Activated CD8-positive, alpha-beta T cell treated with anti-CD3 and anti-CD28 coated beads for 36 hours (primary cell): ENCODE measurements at regions of chr2 and their contacts with region 1.

Region 1: GRCh38 chr2:231411831-231412617 is 16.5 kb downstream of the B3GNT7 start:
- DNase-seq: peak; percentile 88
- ATAC-seq: peak; percentile 99
- H3K4me3 Mint-ChIP-seq: peak overlapping the region; percentile 50
- H3K27ac Mint-ChIP-seq: no peak overlapping the region
- H3K4me1 Mint-ChIP-seq: peaks cover 6% of the 10 kb centered on the region
- H3K27me3 Mint-ChIP-seq: peaks cover 25% of the 10 kb centered on the region
- CTCF ChIP-seq: peak; percentile 85

Region 2: DNA sequence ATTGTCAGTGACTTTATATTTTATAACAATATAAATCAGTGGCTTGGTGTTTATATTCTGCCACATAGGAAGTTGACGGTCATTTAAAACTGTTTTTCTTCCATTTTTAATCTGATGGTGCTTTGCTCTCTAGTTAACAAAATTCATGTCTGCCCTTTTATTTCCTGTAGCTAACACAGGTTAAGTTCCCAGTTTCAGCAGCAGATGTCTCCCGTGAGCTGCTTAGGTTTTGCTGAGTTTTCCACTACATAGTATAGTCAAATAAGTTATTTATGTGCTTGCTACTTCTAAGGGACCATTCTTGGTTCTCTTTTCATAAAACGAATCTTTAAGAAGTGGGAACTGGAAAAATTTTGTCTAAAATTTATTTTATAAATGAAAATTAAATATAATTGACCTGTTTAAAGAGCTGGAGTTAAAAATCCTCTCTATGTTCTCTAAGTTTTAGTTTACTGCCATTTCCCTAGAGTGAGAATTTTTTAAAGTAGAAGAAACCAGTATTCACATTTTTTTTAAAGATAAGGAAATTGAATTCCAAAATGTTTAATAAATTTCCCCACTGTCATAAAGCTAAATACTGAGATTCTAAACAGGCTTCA is 307.8 kb before region 1 on chr2:
- CTCF ChIA-PET with region 1: interaction called, 22 read pairs
- POLR2A ChIA-PET with region 1: no interaction called
- intact Hi-C with region 1: no loop called
- DNase-seq: peak; percentile 76
- ATAC-seq: peak; percentile 92
- H3K4me3 Mint-ChIP-seq: no peak overlapping the region
- H3K27ac Mint-ChIP-seq: no peak overlapping the region
- H3K4me1 Mint-ChIP-seq: peaks cover 11% of the 10 kb centered on the region
- H3K27me3 Mint-ChIP-seq: no peaks in the 10 kb centered on the region
- CTCF ChIP-seq: peak; percentile 80

Region 3: GRCh38 chr2:231227309-231228162 is 184.5 kb before region 1 on chr2:
- CTCF ChIA-PET with region 1: interaction called, 36 read pairs
- POLR2A ChIA-PET with region 1: no interaction called
- intact Hi-C with region 1: loop called (anchors 5 kb)
- DNase-seq: peak; percentile 65
- ATAC-seq: peak; percentile 98
- H3K4me3 Mint-ChIP-seq: no peak overlapping the region
- H3K27ac Mint-ChIP-seq: no peak overlapping the region
- H3K4me1 Mint-ChIP-seq: no peaks in the 10 kb centered on the region
- H3K27me3 Mint-ChIP-seq: no peaks in the 10 kb centered on the region
- CTCF ChIP-seq: peak; percentile 66

Region 4: GRCh38 chr2:231297108-231297908 is 114.7 kb before region 1 on chr2:
- CTCF ChIA-PET with region 1: interaction called, 5 read pairs
- POLR2A ChIA-PET with region 1: no interaction called
- intact Hi-C with region 1: loop called (anchors 10 kb)
- DNase-seq: peak; percentile 47
- ATAC-seq: peak; percentile 72
- H3K4me3 Mint-ChIP-seq: no peak overlapping the region
- H3K27ac Mint-ChIP-seq: no peak overlapping the region
- H3K4me1 Mint-ChIP-seq: no peaks in the 10 kb centered on the region
- H3K27me3 Mint-ChIP-seq: no peaks in the 10 kb centered on the region
- CTCF ChIP-seq: peak; percentile 71

Region 5: DNA sequence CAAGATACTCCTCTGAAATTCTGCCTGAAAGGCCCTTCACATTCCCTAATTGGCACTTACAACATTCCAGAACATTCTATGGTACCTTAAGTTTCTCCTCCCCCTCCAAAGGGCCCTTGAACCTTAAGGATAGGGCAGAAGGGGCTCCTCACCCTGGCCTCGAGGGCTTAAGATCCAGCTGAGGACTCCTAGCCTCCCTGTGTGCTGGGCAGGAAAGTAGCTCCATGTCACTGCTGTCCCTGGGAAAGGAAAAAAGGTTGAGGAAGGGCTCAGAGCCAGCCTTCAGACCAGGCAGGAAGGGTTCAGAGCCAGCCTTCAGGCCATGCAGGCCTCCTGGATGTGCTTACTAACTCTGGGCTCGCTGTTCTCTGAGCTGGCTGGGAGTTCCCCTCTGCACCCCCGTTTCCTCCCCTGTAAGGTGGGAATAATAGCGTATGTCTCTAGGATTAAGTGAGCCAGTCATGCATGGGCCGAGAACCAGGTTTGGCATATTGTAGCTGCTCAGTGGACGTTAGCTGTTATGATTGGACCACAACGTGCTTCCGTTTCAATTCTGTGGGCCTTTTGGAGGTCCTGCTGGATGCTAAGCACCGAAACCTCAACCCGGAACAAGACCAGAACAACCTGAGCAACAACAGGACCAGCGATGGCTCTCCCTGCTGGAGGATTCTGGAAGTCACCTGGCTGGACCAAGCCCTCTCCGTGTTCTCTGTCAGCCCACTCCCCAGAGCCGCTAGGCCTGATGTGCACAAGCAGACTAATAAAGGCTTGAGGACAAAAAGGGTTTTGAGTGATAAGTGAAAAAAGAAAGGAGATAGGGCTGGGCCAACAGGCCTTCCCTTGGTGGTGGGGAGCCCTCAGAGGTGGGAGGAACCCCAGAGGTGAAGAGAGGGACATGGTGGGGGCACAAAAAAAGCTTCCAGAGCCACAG is 17.5 kb before region 1 on chr2:
- CTCF ChIA-PET with region 1: interaction called, 12 read pairs
- POLR2A ChIA-PET with region 1: no interaction called
- intact Hi-C with region 1: no loop called
- DNase-seq: no peak
- ATAC-seq: no peak
- H3K4me3 Mint-ChIP-seq: peak overlapping the region; percentile 50
- H3K27ac Mint-ChIP-seq: peak overlapping the region; percentile 46
- H3K4me1 Mint-ChIP-seq: peaks cover 21% of the 10 kb centered on the region
- H3K27me3 Mint-ChIP-seq: peaks cover 23% of the 10 kb centered on the region
- CTCF ChIP-seq: no peak